ENCODE measurements at regions of chr12 and their contacts with region 1.

Region 1: DNA sequence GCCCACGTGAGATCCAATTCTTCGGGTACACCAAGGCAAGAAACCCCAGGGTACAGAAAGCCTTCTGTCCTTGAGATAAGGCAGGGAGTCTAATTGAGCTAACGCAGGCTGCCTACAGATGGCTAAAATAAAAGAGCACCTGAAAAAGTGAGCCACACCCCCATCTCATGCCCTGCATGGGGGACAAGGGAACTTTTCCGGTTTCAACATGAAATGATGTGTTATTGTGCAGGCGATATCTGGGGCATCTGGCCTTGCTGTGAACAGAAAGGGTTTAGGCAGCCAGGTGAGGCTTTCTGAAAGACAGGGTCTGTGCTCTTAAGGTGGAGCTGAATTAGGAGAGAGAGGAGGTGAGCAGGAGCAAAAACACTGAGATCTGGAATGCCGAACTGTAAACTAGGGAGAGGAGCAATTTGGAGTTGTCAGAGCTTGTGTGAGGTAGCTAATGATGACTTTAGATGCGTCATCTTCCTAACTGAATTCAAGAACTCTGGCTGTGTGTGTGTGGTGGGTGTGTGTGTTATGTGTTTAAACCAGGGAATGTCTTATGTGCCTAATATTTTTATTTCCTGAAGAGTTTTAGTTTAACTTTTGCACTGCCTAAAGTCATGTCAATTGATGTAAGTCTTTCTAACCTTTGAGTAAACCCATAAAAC is 20.1 kb upstream of the LDHB start:
- DNase-seq: no peak
- ATAC-seq: no peak
- H3K4me3 ChIP-seq: no peak overlapping the region
- H3K27ac ChIP-seq: no peak overlapping the region
- H3K4me1 ChIP-seq: peaks cover 0 to 11% (median 0%) of the 10 kb centered on the region in 12 donors
- H3K27me3 ChIP-seq: no peaks in the 10 kb centered on the region
- CTCF ChIP-seq: no peak
- POLR2A ChIP-seq: no peak

Region 2: DNA sequence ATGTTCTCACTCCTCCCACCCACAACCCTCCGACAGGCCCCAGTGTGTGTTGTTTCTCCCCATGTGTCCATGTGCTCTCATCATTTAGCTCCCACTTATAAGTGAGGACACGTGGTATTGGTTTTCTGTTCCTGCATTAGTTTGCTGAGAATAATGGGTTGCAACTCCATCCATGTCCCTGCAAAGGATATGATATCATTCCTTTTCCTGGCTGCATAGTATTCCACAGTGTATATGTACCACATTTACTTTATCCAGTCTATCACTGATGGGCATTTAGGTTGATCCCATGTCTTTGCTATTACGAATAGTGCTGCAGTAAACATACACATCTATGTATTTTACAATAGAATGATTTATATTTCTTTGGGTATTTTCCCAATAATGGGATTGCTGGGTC is 420.6 kb before region 1 on chr12:
- intact Hi-C with region 1: no loop called
- DNase-seq: no peak
- ATAC-seq: no peak
- H3K4me3 ChIP-seq: no peak overlapping the region
- H3K27ac ChIP-seq: no peak overlapping the region
- H3K4me1 ChIP-seq: no peaks in the 10 kb centered on the region
- H3K27me3 ChIP-seq: no peaks in the 10 kb centered on the region
- CTCF ChIP-seq: no peak
- POLR2A ChIP-seq: no peak

Region 3: GRCh38 chr12:21296751-21297406 is 380.9 kb before region 1 on chr12:
- intact Hi-C with region 1: loop called in 2 of 10 experiments (anchors 10 kb)
- DNase-seq: no peak
- ATAC-seq: no peak
- H3K4me3 ChIP-seq: no peak overlapping the region
- H3K27ac ChIP-seq: no peak overlapping the region
- H3K4me1 ChIP-seq: no peaks in the 10 kb centered on the region
- H3K27me3 ChIP-seq: peaks cover 0 to 4% (median 0%) of the 10 kb centered on the region in 9 donors
- CTCF ChIP-seq: peak; percentile 33 to 73 (median 62)
- POLR2A ChIP-seq: no peak

Region 4: DNA sequence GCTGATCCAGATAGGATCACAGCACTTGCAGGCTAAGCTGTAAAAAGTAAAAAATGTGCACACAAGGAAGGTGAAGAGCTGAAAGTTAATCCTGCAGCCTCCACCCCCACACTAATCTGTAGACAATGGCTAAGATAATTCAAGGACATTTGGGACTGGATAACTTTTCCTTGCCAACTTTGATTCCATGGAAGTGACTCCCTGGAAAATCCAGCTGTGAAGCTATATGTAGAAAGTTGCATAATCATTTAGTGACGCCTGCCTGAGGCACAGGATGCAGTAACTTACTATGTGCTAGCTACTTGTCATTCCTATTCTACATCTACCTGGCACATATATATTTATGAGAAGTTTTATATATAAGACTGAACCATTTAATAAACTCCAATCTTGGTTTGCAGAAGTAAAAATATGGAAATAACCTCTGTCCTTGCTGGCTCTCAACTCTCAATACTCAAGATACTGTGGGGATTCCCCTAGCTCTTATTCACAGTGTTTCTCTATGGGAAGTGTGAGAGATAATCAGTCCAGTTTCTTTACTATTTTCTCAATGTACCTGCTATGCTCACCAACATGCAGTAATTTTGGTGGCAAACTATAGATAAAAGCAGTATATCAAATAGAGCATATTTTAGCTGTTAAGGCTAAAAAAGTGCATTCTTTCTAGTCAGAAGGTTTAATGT is 34.9 kb before region 1 on chr12:
- intact Hi-C with region 1: no loop called
- DNase-seq: no peak
- ATAC-seq: peak; percentile 49 to 88 (median 83)
- H3K4me3 ChIP-seq: no peak overlapping the region
- H3K27ac ChIP-seq: peak overlapping the region; percentile 11 to 79 (median 57)
- H3K4me1 ChIP-seq: peaks cover 0 to 86% (median 29%) of the 10 kb centered on the region in 12 donors
- H3K27me3 ChIP-seq: no peaks in the 10 kb centered on the region
- CTCF ChIP-seq: no peak
- POLR2A ChIP-seq: no peak

Region 5: GRCh38 chr12:21894792-21895595 is 217.2 kb after region 1 on chr12:
- intact Hi-C with region 1: no loop called
- DNase-seq: no peak
- ATAC-seq: no peak
- H3K4me3 ChIP-seq: no peak overlapping the region
- H3K27ac ChIP-seq: peak overlapping the region in 1 of 12 donors; percentile 40
- H3K4me1 ChIP-seq: peaks cover 0 to 28% (median 14%) of the 10 kb centered on the region in 12 donors
- H3K27me3 ChIP-seq: no peaks in the 10 kb centered on the region
- CTCF ChIP-seq: no peak
- POLR2A ChIP-seq: no peak

Region 6: DNA sequence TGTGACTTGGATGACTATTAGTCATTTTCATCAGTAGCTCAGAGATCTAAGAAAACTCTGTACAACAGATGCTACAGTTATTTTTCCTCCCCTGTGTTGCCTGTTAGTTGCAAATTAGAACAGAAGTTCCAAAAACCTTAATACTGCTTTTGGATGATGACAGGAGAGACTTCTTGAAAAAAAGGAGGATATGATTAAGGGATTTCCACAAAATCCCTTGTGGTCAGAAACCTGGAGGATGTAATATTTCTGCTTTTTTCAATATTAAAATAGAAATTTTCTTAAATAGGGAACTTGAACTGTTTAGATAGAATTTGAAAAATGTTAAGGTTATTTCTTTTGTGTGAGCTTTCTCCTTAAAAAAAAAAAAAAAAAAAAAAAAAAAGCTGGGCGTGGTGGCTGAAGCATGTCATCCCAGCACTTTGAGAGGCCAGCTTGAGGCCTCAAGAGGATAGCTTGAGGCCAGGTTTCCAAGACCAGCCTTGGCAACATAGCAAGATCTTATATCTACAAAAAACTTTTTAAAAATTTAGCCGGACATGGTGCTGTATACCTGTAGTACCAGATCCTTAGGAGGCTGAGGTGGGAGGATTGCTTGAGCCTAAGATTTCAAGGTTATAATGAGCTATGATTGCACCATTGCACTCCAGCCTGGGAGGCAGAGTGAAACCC is 382.4 kb after region 1 on chr12:
- intact Hi-C with region 1: no loop called
- DNase-seq: no peak
- ATAC-seq: no peak
- H3K4me3 ChIP-seq: no peak overlapping the region
- H3K27ac ChIP-seq: no peak overlapping the region
- H3K4me1 ChIP-seq: no peaks in the 10 kb centered on the region
- H3K27me3 ChIP-seq: no peaks in the 10 kb centered on the region
- CTCF ChIP-seq: no peak
- POLR2A ChIP-seq: no peak

Measured in heart left ventricle (tissue), 16 donors.